Activated CD4-positive, alpha-beta T cell treated with anti-CD3 and anti-CD28 coated beads, Interleukin-2, amount 10 ng/mL, durations not matched to agents 24 days and 14 days (primary cell): ENCODE measurements at regions of chr18 and their contacts with region 1.

Region 1: DNA sequence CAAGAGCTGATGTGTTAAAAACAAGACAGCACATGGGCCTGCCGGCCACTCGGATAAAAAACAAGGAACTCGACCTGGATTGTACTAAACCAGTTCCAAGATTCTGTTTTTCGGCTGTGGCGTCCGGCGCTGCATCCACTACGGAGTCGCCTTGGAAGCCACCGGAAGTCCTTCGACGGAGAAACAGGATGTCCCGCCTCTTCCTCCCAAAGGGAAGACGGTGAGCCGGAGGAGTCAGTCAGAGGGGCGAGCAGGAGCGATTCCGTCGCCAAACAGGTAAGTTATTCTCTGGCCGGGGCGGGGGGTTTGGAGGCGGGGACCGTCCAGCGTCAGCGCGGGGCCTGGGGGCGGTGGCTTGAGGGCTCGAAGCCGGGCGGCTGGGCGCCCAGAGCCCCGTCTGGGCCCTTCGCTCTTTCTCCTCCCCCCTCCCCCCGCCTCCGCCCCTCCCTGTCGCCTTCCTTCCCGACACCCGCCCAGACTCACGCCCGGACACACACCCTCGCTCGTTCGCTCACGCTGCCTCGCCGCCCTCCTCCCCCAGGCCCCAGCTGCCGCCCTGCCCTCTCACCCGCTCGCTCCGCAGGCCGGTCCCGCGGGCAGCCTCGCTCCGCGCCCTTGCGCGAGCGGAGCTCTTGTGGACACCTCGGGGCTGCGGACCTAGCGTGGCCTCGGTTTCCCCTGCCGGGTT is at the start of gene ZNF407:
- DNase-seq: peak; percentile 97
- H3K4me3 Mint-ChIP-seq: peak within 1 kb of the TSS; percentile 97
- H3K27ac Mint-ChIP-seq: peak within 1 kb of the TSS; percentile 99
- H3K4me1 Mint-ChIP-seq: peaks cover 35% of the 10 kb centered on the region
- H3K27me3 Mint-ChIP-seq: no peaks in the 10 kb centered on the region
- total RNA-seq, gene ZNF407: 17.8 and 18.1 TPM in 2 replicates

Region 2: GRCh38 chr18:74063023-74063422 is 534.8 kb before region 1 on chr18:
- intact Hi-C with region 1: loop called (anchors 5 kb)
- DNase-seq: peak; percentile 83
- H3K4me3 Mint-ChIP-seq: peak overlapping the region; percentile 82
- H3K27ac Mint-ChIP-seq: peak overlapping the region; percentile 84
- H3K4me1 Mint-ChIP-seq: peaks cover 48% of the 10 kb centered on the region
- H3K27me3 Mint-ChIP-seq: no peaks in the 10 kb centered on the region

Region 3: DNA sequence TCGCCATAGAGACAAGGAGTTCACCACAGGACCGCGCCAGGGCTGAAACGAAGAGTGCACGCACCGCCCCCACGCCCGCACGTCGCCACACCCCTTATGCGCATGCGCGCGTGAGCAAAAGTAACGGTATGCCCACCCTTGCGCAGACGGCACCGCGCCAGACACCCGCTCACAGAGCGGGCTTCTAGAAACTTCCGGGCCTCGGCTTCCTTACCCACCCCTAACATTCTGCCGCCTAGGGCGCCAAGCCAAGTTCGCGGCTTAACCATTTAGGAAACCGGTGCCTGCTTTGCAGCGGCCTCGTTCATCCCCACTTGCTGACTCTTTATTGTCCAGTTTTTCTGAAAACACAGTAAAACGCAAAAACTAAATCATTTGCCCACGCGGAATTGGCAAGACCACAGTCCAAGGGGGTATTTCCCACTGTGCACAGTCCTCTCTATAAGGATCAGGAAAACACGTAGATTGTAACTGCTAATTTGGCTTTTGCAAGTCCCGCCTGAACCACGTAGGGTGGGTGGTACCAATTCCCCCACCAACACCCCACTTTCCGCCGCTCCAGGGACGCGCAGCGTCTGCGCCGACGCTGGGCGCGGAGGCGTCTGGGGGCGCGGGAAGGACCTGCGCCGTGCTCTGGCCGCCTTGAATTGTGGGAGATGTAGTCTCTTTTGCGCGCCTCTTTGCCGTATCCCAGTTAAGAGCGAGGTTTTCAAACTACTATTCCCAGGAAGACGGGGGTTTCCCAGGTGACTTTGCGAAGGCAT is 449.8 kb before region 1 on chr18 and contains the starts of genes FBXO15 and TIMM21:
- intact Hi-C with region 1: loop called (anchors 2 kb)
- DNase-seq: peak; percentile 99
- H3K4me3 Mint-ChIP-seq: peak within 1 kb of the TSS; percentile 98
- H3K27ac Mint-ChIP-seq: peak within 1 kb of the TSS; percentile 97
- H3K4me1 Mint-ChIP-seq: peaks cover 50% of the 10 kb centered on the region
- H3K27me3 Mint-ChIP-seq: peaks cover 5% of the 10 kb centered on the region
- total RNA-seq, gene FBXO15: 1.2 and 1.3 TPM in 2 replicates
- total RNA-seq, gene TIMM21: 61.8 and 71.8 TPM in 2 replicates

Region 4: GRCh38 chr18:74196220-74197119 is 401.3 kb before region 1 on chr18:
- intact Hi-C with region 1: loop called (anchors 1 kb)
- DNase-seq: peak; percentile 82
- H3K4me3 Mint-ChIP-seq: peak overlapping the region; percentile 81
- H3K27ac Mint-ChIP-seq: peak overlapping the region; percentile 11
- H3K4me1 Mint-ChIP-seq: peaks cover 2% of the 10 kb centered on the region
- H3K27me3 Mint-ChIP-seq: peaks cover 2% of the 10 kb centered on the region

Region 5: DNA sequence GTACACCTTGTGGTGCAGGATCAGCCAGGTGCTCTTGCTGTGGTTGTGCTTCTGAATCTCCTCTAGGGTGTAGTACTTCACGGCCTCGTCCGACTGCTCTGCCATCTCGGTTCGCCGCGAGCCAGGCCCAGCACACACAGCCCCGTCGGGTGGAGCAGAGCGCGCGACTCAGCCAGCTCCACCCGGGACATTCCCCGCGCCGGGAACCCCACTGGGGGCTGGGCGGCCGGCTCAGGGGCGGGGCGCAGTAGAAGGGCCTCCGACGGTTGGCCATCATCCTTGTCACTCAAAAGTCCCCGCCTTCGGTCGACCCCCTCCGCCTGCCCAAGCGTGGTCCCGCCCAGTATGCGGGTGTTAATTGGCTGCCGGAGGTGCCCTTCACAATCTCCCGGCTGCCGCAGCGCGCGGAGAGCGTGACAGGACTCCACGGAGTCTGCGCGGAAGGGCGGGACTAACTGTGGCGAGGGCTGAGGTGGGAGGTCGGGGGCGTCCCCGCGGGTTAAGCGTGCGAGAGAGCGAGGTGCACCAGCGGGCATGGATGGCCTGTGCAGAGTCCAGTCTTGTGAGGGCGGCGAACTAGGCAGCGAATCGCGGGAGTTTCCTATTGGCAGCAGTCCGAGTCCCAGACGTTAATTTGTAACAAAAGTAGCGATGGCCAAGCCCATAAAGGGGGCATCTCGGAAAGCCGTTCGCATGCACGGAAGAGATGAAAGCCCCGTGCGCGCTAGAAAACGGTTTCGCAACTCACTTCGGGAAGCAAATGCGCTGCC is 305.9 kb before region 1 on chr18 and contains the start of gene CYB5A:
- intact Hi-C with region 1: loop called (anchors 1 kb)
- DNase-seq: peak; percentile 99
- H3K4me3 Mint-ChIP-seq: no peak within 1 kb of the TSS
- H3K27ac Mint-ChIP-seq: peak within 1 kb of the TSS; percentile 88
- H3K4me1 Mint-ChIP-seq: peaks cover 9% of the 10 kb centered on the region
- H3K27me3 Mint-ChIP-seq: peaks cover 13% of the 10 kb centered on the region
- total RNA-seq, gene CYB5A: 34.8 and 40.7 TPM in 2 replicates

Region 6: DNA sequence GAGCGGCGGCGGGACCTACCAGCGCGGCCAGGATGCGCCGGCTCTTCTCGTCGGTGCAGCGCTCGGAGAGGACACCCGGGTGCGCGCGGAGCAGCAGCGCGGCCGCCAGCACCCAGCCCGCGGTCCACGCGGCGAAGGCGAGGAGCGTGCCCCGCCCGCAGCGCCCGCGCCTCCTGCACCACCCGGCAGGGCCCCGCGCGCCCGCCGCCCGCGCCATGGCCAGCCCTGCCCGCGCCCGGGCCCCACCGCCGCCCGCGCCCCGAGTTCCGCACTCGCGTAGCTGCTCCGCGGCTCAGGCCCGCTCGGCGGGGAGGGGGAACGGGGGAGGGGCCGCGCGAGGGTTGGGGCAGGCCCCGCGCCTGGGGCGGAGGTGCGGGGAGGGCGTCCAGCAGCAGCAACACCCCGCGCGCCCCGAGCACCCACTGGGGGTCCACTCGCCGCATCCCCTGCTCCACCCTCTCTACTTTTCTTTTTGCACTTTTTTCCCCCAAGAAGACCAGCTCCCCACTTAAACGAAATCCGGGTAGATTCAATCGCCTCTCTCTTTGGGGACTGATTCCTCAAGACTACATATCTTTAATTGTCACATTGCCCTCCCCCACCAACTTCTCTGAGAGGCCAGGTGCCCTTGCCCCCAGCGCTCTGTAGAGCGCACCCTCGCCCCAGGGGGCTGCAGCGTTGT is 140.6 kb before region 1 on chr18 and contains the start of gene DIPK1C:
- intact Hi-C with region 1: no loop called
- DNase-seq: no peak
- H3K4me3 Mint-ChIP-seq: peak within 1 kb of the TSS; percentile 43
- H3K27ac Mint-ChIP-seq: no peak within 1 kb of the TSS
- H3K4me1 Mint-ChIP-seq: no peaks in the 10 kb centered on the region
- H3K27me3 Mint-ChIP-seq: peaks cover 66% of the 10 kb centered on the region
- total RNA-seq, gene DIPK1C: not detected in 2 replicates

Region 7: DNA sequence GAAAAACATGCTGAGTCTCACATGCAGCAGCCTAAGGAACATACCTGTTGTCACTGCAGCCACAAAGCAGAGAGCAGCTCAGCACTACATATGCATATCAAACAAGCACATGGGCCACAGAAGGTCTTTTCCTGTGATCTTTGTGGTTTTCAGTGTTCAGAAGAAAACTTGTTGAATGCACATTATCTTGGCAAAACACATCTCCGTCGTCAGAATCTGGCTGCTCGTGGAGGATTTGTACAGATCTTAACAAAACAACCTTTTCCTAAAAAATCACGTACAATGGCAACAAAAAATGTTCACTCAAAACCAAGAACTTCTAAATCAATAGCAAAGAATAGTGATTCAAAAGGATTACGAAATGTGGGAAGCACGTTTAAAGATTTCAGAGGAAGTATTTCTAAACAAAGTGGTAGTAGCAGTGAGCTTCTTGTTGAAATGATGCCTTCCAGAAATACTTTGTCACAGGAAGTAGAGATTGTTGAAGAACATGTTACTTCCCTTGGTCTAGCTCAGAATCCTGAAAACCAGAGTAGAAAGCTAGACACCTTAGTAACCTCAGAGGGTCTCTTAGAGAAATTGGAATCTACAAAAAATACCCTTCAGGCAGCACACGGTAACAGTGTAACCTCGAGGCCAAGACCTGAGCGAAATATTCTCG is 33.9 kb after region 1 on chr18:
- intact Hi-C with region 1: loop called (anchors 2 kb)
- DNase-seq: peak; percentile 81
- H3K4me3 Mint-ChIP-seq: peak overlapping the region; percentile 83
- H3K27ac Mint-ChIP-seq: peak overlapping the region; percentile 94
- H3K4me1 Mint-ChIP-seq: peaks cover 38% of the 10 kb centered on the region
- H3K27me3 Mint-ChIP-seq: no peaks in the 10 kb centered on the region

Region 8: GRCh38 chr18:74990563-74991081 is 392.8 kb after region 1 on chr18:
- intact Hi-C with region 1: no loop called
- DNase-seq: peak; percentile 59
- H3K4me3 Mint-ChIP-seq: peak overlapping the region; percentile 40
- H3K27ac Mint-ChIP-seq: peak overlapping the region; percentile 64
- H3K4me1 Mint-ChIP-seq: peaks cover 52% of the 10 kb centered on the region
- H3K27me3 Mint-ChIP-seq: no peaks in the 10 kb centered on the region

Region 9: DNA sequence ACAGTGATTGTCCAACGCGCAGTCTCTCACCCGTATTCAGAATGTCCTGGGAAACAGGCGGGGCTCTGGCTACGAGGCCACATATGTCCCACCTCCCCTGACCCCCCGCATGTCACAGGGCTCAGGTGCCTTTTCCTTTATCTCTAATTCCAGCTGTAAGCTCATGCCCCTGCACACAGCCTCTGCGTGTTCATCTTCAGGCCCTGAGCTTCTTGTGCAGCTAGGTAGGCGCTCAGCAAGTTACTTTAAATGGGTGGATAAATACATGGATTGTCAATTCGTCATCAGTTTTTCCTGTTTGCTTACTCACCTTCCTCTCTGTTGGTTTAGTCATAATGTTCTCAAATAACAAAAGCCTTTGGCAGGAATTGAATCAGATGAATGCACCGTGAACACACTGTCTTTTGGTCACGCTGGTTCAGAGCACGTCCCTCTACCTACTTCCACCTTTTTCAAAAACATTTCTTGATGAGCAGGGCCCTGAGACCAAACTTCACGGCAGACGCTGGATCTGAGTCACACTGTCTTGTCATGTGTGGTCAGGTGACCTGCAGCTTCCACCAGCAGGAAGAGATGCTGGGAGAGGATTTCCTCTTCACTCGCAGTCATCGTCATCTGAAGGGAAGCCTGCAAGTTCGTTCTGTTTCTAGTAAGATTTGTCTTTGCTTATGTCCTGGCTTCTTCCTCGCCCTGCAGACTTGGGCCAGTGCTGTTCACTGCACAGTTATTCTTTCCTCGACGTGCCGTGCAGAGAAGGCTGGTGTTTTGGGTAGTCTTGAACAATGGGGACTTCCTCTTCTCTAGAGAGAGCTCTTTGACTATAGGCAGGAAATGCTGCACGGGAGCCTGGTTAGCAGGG is 473.0 kb after region 1 on chr18:
- intact Hi-C with region 1: loop called (anchors 10 kb)
- DNase-seq: peak; percentile 91
- H3K4me3 Mint-ChIP-seq: peak overlapping the region; percentile 79
- H3K27ac Mint-ChIP-seq: peak overlapping the region; percentile 92
- H3K4me1 Mint-ChIP-seq: peaks cover 29% of the 10 kb centered on the region
- H3K27me3 Mint-ChIP-seq: no peaks in the 10 kb centered on the region